Naive thymus-derived CD4-positive, alpha-beta T cell (primary cell): ENCODE measurements at regions of chrX and their contacts with region 1.

Region 1: DNA sequence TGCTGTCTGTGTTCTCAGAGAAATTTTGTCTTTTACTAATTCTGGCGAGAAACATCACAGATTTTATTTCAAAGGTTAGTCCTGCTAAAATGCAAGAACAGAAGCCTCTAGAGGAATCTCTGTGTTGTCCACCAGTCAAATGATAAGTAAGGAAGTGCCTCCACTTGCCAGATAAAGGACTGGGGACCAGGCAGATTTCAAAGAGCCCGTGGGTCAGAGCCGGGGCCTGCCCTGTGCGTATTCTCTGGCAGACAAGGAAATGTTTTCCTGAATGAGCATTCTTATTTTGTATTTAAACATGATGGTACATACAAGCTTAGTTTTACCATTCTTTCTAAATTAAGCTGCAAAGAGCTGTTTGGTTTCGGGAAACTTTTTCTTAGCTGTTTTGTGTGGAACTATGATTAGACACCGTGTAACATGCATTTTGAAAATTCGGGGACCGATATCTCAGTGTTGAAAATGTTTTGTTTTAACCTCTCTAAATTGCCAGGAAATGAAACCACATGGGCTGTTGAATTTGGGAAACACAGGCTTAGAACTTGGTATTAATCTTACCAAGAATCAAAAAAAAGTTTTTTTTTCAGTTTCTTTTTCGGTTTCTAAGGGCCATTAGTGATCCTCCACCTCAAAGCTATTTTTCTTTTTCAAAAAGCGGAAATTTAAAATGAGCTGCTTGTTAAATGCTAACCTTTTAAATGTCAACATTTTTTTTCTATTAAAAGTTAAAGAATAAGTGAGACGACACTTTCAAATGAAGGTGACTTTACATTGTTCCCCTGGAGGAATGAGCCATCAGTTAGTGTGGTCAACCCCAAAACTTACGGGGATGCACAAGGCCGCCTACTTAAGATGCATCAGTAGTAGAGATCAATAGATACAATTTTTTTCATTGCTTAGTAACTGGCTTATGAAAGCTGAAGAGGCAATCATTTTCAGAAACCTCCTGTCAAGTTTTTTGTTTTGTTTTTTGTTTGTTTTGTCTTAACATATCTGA is 89.6 kb upstream of the MTM1 start:
- DNase-seq: peak in 4 of 9 donors; percentile 4 to 31 (median 24)
- ATAC-seq: peak; percentile 46
- H3K4me3 ChIP-seq: peak overlapping the region; percentile 46
- H3K4me3 Mint-ChIP-seq: peak overlapping the region; percentile 51 to 81 (median 76)
- H3K27ac ChIP-seq: peak overlapping the region; percentile 41
- H3K27ac Mint-ChIP-seq: peak overlapping the region in 8 of 9 donors; percentile 84 to 97 (median 85)
- H3K4me1 ChIP-seq: peaks cover 3 to 14% of the 10 kb centered on the region in 2 donors
- H3K4me1 Mint-ChIP-seq: peaks cover 6 to 67% (median 34%) of the 10 kb centered on the region in 7 donors
- H3K27me3 ChIP-seq: no peaks in the 10 kb centered on the region
- H3K27me3 Mint-ChIP-seq: no peaks in the 10 kb centered on the region

Region 2: GRCh38 chrX:150410513-150410912 is 68.3 kb before region 1 on chrX:
- CTCF ChIA-PET with region 1: no interaction called
- POLR2A ChIA-PET with region 1: no interaction called
- intact Hi-C with region 1: loop called in 1 of 2 experiments (anchors 1 kb)
- DNase-seq: peak in 6 of 9 donors; percentile 3 to 54 (median 31)
- ATAC-seq: peak; percentile 81
- H3K4me3 ChIP-seq: no peak overlapping the region
- H3K4me3 Mint-ChIP-seq: peak overlapping the region in 5 of 10 donors; percentile 17 to 71 (median 29)
- H3K27ac ChIP-seq: no peak overlapping the region
- H3K27ac Mint-ChIP-seq: peak overlapping the region in 4 of 9 donors; percentile 21 to 72 (median 38)
- H3K4me1 ChIP-seq: peaks cover 10 to 21% of the 10 kb centered on the region in 2 donors
- H3K4me1 Mint-ChIP-seq: peaks cover 0 to 47% (median 16%) of the 10 kb centered on the region in 7 donors
- H3K27me3 ChIP-seq: no peaks in the 10 kb centered on the region
- H3K27me3 Mint-ChIP-seq: peaks cover 0 to 3% (median 0%) of the 10 kb centered on the region in 5 donors

Region 3: GRCh38 chrX:150459196-150459760 is 19.5 kb before region 1 on chrX:
- CTCF ChIA-PET with region 1: interaction called, 3 read pairs
- POLR2A ChIA-PET with region 1: no interaction called
- intact Hi-C with region 1: loop called in 1 of 2 experiments (anchors 2 kb)
- DNase-seq: peak in 6 of 9 donors; percentile 5 to 30 (median 9)
- ATAC-seq: peak; percentile 27
- H3K4me3 ChIP-seq: no peak overlapping the region
- H3K4me3 Mint-ChIP-seq: peak overlapping the region in 7 of 10 donors; percentile 1 to 69 (median 47)
- H3K27ac ChIP-seq: no peak overlapping the region
- H3K27ac Mint-ChIP-seq: peak overlapping the region in 8 of 9 donors; percentile 44 to 93 (median 72)
- H3K4me1 ChIP-seq: peaks cover 0 to 8% of the 10 kb centered on the region in 2 donors
- H3K4me1 Mint-ChIP-seq: peaks cover 9 to 42% (median 14%) of the 10 kb centered on the region in 7 donors
- H3K27me3 ChIP-seq: no peaks in the 10 kb centered on the region
- H3K27me3 Mint-ChIP-seq: no peaks in the 10 kb centered on the region